ENCODE measurements at regions of chr15 and their contacts with region 1.

Region 1: DNA sequence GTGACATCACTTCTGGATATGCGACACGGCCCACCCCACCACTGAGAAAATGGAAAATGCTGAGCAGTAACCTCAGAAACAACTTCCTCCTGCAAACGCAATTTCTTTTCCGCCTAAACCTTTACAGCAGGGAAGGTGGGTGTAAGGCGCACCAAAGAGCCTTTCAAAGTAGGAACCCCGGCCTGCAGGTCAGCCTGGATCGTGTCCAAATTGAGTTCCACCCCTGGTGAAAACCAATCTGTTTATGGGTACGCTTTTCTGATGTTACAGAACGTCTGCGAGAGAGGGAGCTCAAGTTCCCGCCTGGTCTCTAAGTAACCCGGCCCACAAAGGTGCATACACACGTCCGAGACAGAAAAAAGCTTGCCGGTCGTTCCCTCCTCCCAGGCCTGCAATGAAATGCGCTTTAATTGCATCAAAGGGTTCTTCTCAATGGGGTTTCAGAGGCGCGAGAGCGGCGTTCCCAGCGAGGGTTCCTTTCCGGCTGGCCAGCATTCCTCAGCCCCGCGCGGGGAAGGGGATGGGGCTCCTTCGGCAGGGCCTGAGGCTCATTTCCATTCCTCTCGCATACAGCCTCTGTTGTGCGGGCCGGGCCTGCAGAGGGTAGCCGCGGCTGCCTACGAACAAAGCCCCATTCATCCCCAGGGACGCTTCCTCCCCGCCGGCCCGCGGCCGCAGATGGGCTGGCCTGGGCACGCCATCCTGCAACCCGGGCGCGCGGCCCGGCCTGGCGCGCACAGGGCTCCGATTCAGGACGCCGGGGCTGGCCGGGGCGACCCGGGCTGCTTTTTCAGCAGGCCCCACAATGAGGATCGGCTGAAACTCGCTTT is 138.1 kb downstream of the TMCO5A start:
- DNase-seq: peak; percentile 81 to 83
- H3K4me3 ChIP-seq: peak overlapping the region; percentile 51
- H3K4me3 Mint-ChIP-seq: peak overlapping the region; percentile 81
- H3K27ac Mint-ChIP-seq: peak overlapping the region; percentile 93
- H3K4me1 ChIP-seq: peaks cover 33% of the 10 kb centered on the region; the same call in 1 of the 2 replicates
- H3K4me1 Mint-ChIP-seq: peaks cover 15% of the 10 kb centered on the region
- H3K27me3 ChIP-seq: no peaks in the 10 kb centered on the region
- H3K27me3 Mint-ChIP-seq: no peaks in the 10 kb centered on the region
- CTCF ChIP-seq: no peak

Region 2: DNA sequence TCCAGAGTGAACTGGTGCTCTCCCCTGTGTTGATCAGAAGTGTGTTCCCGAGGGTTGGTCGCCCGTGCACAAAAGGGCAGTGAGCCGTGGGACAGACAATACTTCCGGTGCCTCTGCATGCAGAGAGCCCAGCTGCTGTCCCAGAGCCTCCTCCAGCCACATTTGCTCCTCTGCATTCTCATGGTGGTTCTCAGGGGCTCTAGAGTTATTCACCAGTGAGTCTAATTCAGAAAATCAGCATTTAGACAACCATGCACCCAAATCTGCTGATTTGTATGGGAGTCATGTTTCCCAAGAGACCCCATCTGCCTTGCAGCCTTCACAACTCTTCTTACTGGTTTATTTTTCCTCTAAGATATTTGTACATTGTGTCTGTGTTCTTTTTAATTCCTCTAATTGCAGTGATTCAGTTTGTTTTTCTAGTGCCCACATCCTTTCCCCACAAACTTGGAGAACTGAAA is 73.1 kb after region 1 on chr15:
- CTCF ChIA-PET with region 1: no interaction called
- POLR2A ChIA-PET with region 1: no interaction called
- intact Hi-C with region 1: no loop called
- DNase-seq: no peak
- H3K4me3 ChIP-seq: no peak overlapping the region
- H3K4me3 Mint-ChIP-seq: no peak overlapping the region
- H3K27ac Mint-ChIP-seq: no peak overlapping the region
- H3K4me1 ChIP-seq: no peaks in the 10 kb centered on the region
- H3K4me1 Mint-ChIP-seq: peaks cover 7% of the 10 kb centered on the region
- H3K27me3 ChIP-seq: no peaks in the 10 kb centered on the region
- H3K27me3 Mint-ChIP-seq: peaks cover 2% of the 10 kb centered on the region
- CTCF ChIP-seq: no peak

Region 3: DNA sequence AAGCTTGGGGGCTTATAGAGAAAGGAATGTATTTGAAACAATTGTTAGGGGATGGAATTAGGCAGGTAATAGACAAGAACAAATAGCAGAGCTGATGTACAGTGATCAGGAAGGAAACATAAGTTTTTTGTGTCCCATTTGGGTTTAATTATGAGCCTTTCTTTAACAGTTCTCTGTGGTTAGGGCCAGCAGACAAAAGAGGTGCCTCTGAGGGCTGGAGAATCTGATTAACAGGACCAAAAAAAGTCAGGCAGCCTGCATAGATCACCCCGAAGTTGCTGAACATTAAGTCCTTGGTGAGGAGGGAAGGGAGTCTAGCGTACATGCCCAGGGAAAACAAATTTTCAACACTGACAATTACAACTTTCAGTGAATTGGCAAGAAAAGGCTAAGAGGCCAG is 91.5 kb after region 1 on chr15:
- CTCF ChIA-PET with region 1: interaction called, 3 read pairs
- POLR2A ChIA-PET with region 1: interaction called, 5 read pairs
- intact Hi-C with region 1: loop called (anchors 1 kb)
- DNase-seq: no peak
- H3K4me3 ChIP-seq: no peak overlapping the region
- H3K4me3 Mint-ChIP-seq: peak overlapping the region; percentile 66
- H3K27ac Mint-ChIP-seq: peak overlapping the region; percentile 78
- H3K4me1 ChIP-seq: peaks cover 41% of the 10 kb centered on the region
- H3K4me1 Mint-ChIP-seq: peaks cover 32% of the 10 kb centered on the region
- H3K27me3 ChIP-seq: no peaks in the 10 kb centered on the region
- H3K27me3 Mint-ChIP-seq: no peaks in the 10 kb centered on the region
- CTCF ChIP-seq: no peak

Region 4: DNA sequence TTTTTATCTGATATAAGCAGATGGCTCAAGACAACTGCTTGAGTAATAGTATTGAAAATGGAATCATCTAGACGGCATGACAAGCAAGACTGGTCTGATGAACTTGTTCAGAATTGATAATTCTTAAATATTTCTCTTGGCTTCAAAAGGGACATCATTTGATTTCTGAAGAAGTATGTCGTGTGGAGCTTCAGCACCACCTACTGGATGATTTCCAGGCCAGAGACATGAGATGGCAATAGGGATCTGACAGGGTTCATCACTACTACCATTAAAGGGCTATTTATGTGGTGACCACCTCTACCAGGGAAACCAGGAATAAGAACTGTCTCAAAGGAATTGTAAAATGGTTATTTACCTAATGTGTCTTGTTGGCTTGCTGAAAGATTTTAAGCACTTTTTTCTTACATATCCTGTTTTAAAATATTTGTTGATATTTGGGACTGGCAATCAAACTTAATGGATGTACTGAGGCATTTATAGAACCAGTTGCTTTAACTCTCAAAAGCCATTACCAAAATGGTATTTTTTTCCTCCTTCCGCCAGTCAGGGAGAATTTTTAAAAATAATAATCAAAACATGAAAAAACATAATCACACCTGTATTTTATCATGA is 281.9 kb after region 1 on chr15:
- CTCF ChIA-PET with region 1: no interaction called
- POLR2A ChIA-PET with region 1: no interaction called
- intact Hi-C with region 1: loop called (anchors 1 kb)
- DNase-seq: peak; percentile 58 to 70
- H3K4me3 ChIP-seq: no peak overlapping the region
- H3K4me3 Mint-ChIP-seq: no peak overlapping the region
- H3K27ac Mint-ChIP-seq: no peak overlapping the region
- H3K4me1 ChIP-seq: no peaks in the 10 kb centered on the region
- H3K4me1 Mint-ChIP-seq: no peaks in the 10 kb centered on the region
- H3K27me3 ChIP-seq: no peaks in the 10 kb centered on the region
- H3K27me3 Mint-ChIP-seq: no peaks in the 10 kb centered on the region
- CTCF ChIP-seq: peak; percentile 69 to 70

Region 5: DNA sequence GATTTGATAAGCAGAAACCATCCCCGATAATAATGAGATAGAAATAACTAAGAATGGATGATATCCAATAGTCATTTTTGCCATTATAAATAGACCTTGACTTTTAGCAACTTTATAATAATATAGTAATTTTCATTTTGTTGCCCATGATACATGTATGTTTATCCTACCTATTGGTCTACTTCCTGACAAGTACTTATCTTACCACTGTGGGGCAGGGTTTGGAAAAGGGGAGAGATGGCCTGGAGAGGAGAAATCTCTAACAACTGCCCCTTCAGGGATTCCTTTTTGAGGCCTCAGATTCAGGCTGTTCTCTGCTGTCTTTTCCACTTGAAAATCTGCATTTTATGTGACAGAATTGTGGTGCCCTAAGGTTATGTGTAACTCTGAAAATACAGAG is 423.6 kb after region 1 on chr15:
- CTCF ChIA-PET with region 1: no interaction called
- POLR2A ChIA-PET with region 1: no interaction called
- intact Hi-C with region 1: no loop called
- DNase-seq: no peak
- H3K4me3 ChIP-seq: no peak overlapping the region
- H3K4me3 Mint-ChIP-seq: no peak overlapping the region
- H3K27ac Mint-ChIP-seq: no peak overlapping the region
- H3K4me1 ChIP-seq: no peaks in the 10 kb centered on the region
- H3K4me1 Mint-ChIP-seq: no peaks in the 10 kb centered on the region
- H3K27me3 ChIP-seq: no peaks in the 10 kb centered on the region
- H3K27me3 Mint-ChIP-seq: no peaks in the 10 kb centered on the region
- CTCF ChIP-seq: no peak

Measured in Caco-2 (cell line).